Prostate gland (tissue), 2 donors: ENCODE measurements at regions of chrX and their contacts with region 1.

Region 1: DNA sequence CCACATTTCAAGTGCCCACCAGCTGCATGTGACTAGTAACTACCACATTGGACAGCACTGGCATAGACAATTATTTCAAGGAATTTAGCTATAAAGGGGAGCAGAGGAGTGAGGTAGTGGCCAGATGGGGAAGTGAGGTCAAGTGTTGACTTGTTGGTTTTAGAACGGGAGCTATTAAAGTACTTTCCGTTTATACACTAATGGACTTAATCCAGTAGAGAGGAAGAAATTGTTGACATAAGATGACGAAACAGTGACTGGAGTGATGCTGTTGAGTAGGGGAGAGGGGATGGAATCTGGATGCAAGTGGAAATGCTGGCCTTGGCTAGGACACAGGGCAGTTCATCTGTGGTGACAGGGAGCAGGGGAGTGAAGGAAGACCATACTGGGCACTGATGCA is 154.4 kb downstream of the AMMECR1 start:
- DNase-seq: no peak
- H3K4me3 ChIP-seq: no peak overlapping the region
- H3K27ac ChIP-seq: no peak overlapping the region
- H3K4me1 ChIP-seq: no peaks in the 10 kb centered on the region
- H3K27me3 ChIP-seq: no peaks in the 10 kb centered on the region
- CTCF ChIP-seq: no peak
- POLR2A ChIP-seq: no peak

Region 2: DNA sequence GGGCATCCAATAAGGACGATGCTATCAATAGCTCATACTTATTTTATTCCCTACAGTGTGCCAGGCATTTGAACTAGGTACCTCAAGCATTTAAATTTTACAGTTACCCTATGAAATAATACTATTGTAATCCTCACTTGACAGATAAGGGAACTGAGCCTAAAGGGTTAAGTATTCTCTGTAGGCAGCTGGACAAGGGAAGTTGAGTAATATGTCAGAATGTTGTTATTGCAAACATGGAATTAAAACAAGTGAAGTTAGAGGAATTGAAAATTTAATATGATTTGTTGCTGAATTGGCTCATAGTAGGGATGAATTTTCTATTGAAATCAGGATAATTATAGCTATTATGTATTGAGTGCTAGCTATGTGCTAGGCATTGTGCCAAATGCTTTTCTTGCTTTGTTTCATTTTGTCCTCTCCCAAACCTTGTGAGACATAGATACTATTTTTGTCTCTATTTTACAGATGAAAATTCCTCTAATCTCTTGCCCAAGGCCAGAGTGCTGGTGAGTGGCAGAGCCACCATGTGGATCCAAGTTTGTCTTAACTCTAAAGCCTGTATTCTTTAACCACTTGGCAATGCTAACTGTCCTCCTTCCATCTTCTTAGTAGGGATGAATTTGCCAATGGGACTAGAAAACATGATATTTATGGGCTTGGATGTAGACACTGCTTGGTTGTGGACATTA is 102.5 kb before region 1 on chrX:
- intact Hi-C with region 1: no loop called
- DNase-seq: no peak
- H3K4me3 ChIP-seq: no peak overlapping the region
- H3K27ac ChIP-seq: no peak overlapping the region
- H3K4me1 ChIP-seq: no peaks in the 10 kb centered on the region
- H3K27me3 ChIP-seq: no peaks in the 10 kb centered on the region
- CTCF ChIP-seq: no peak
- POLR2A ChIP-seq: no peak

Region 3: GRCh38 chrX:110108381-110108821 is 55.1 kb before region 1 on chrX:
- intact Hi-C with region 1: no loop called
- DNase-seq: no peak
- H3K4me3 ChIP-seq: no peak overlapping the region
- H3K27ac ChIP-seq: no peak overlapping the region
- H3K4me1 ChIP-seq: no peaks in the 10 kb centered on the region
- H3K27me3 ChIP-seq: no peaks in the 10 kb centered on the region
- CTCF ChIP-seq: no peak
- POLR2A ChIP-seq: no peak

Region 4: DNA sequence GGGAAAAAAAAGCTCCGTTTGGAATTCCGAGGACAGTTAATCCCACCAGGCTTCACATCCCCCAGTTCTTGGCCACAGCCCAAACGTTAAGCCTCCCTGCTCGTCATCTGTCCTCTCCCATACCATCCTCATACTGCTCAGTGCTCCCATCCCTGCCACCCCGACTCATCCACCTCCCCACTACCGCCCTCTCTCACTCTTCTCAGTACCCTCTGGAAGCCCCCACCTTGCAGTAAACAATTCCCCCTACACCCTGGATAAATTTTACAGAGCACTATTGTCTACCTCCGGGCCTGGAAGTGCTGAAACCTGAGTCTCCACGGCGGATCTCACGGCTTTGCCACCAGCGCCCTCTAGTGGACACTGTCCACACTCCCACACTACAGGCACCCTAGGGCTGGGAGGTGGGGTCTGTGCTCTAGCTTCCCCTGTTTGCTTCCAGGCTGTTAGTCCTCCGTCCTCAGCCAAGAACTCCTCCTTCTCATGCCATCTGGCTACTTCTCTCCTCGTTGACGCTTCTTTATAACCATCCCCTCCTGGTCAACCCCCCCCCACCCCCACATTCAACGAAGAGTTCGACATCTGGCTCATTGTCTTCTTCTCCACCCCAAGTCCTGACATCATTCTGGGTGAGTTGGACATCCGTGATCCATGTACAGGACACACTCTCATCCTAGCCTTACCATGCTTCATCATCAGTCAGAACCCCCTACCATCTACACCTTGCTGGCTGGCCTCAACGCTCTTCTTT is 249.7 kb after region 1 on chrX:
- intact Hi-C with region 1: loop called (anchors 5 kb)
- DNase-seq: peak; percentile 41
- H3K4me3 ChIP-seq: no peak overlapping the region
- H3K27ac ChIP-seq: no peak overlapping the region
- H3K4me1 ChIP-seq: no peaks in the 10 kb centered on the region
- H3K27me3 ChIP-seq: no peaks in the 10 kb centered on the region
- CTCF ChIP-seq: peak in 3 of 4 experiments; percentile 63 to 68 (median 68)
- POLR2A ChIP-seq: no peak